Natural killer cell (primary cell): ENCODE measurements at regions of chr4 and their contacts with region 1.

Region 1: GRCh38 chr4:44678094-44679041 is at the start of gene GUF1:
- DNase-seq: peak; percentile 88 to 95
- ATAC-seq: peak; percentile 86 to 95 (median 90)
- H3K4me3 ChIP-seq: peak within 1 kb of the TSS; percentile 78
- H3K4me3 Mint-ChIP-seq: peak within 1 kb of the TSS; percentile 95
- H3K27ac ChIP-seq: peak within 1 kb of the TSS; percentile 92
- H3K27ac Mint-ChIP-seq: peak within 1 kb of the TSS; percentile 98
- H3K4me1 ChIP-seq: peaks cover 8% of the 10 kb centered on the region
- H3K4me1 Mint-ChIP-seq: peaks cover 20 to 24% of the 10 kb centered on the region in 2 donors
- H3K27me3 ChIP-seq: no peaks in the 10 kb centered on the region
- H3K27me3 Mint-ChIP-seq: peaks cover 5 to 8% of the 10 kb centered on the region in 2 donors
- CTCF ChIP-seq: no peak
- total RNA-seq, gene GUF1: 14.1 to 17.9 (median 15.2) TPM

Region 2: GRCh38 chr4:44726262-44726871 is 48.0 kb after region 1 on chr4 and contains the start of gene GNPDA2:
- intact Hi-C with region 1: loop called (anchors 1 kb)
- DNase-seq: peak; percentile 70 to 90
- ATAC-seq: peak; percentile 90 to 94 (median 91)
- H3K4me3 ChIP-seq: peak within 1 kb of the TSS; percentile 92
- H3K4me3 Mint-ChIP-seq: peak within 1 kb of the TSS; percentile 95
- H3K27ac ChIP-seq: peak within 1 kb of the TSS; percentile 63
- H3K27ac Mint-ChIP-seq: peak within 1 kb of the TSS; percentile 70 to 92
- H3K4me1 ChIP-seq: peaks cover 8% of the 10 kb centered on the region
- H3K4me1 Mint-ChIP-seq: peaks cover 32 to 36% of the 10 kb centered on the region in 2 donors
- H3K27me3 ChIP-seq: peaks cover 2% of the 10 kb centered on the region
- H3K27me3 Mint-ChIP-seq: peaks cover 0 to 6% of the 10 kb centered on the region in 2 donors
- CTCF ChIP-seq: peak; percentile 11
- total RNA-seq, gene GNPDA2: 9.2 to 15.2 (median 9.4) TPM